ENCODE measurements at regions of chr10 and their contacts with region 1.

Region 1: GRCh38 chr10:1434912-1435692 is 302.2 kb downstream of the ADARB2 start:
- DNase-seq: no peak
- ATAC-seq: no peak
- H3K4me3 ChIP-seq: no peak overlapping the region
- H3K27ac ChIP-seq: no peak overlapping the region
- H3K4me1 ChIP-seq: no peaks in the 10 kb centered on the region
- H3K27me3 ChIP-seq: no peaks in the 10 kb centered on the region
- CTCF ChIP-seq: no peak
- POLR2A ChIP-seq: no peak

Region 2: DNA sequence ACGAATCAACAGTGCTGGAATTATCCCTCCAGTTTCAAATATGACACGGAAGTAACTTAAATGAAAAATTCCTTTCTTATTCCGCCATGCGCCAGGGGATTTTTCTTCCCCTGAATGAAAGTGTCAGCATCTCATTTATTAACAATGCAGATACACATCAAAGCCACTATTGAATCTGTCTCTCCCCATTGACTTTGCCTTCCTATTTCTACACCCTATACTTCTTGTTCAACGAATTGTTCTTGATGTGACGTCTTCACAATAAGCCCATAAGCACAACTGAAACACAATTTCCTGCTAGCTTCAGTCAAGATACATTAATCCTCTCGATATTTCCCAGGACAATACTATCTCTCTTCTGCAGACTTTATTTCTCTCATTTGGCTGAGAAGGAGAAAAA is 48.7 kb after region 1 on chr10:
- in situ Hi-C with region 1: no loop called
- intact Hi-C with region 1: loop called (anchors 5 kb)
- DNase-seq: no peak
- ATAC-seq: no peak
- H3K4me3 ChIP-seq: no peak overlapping the region
- H3K27ac ChIP-seq: no peak overlapping the region
- H3K4me1 ChIP-seq: no peaks in the 10 kb centered on the region
- H3K27me3 ChIP-seq: no peaks in the 10 kb centered on the region
- CTCF ChIP-seq: no peak
- POLR2A ChIP-seq: no peak

Region 3: GRCh38 chr10:1581189-1581588 is 146.1 kb after region 1 on chr10:
- in situ Hi-C with region 1: no loop called
- intact Hi-C with region 1: no loop called
- DNase-seq: no peak
- ATAC-seq: no peak
- H3K4me3 ChIP-seq: no peak overlapping the region
- H3K27ac ChIP-seq: no peak overlapping the region
- H3K4me1 ChIP-seq: no peaks in the 10 kb centered on the region
- H3K27me3 ChIP-seq: no peaks in the 10 kb centered on the region
- CTCF ChIP-seq: no peak
- POLR2A ChIP-seq: no peak